Gastrocnemius medialis (tissue), 4 donors: ENCODE measurements at regions of chr15 and their contacts with region 1.

Region 1: DNA sequence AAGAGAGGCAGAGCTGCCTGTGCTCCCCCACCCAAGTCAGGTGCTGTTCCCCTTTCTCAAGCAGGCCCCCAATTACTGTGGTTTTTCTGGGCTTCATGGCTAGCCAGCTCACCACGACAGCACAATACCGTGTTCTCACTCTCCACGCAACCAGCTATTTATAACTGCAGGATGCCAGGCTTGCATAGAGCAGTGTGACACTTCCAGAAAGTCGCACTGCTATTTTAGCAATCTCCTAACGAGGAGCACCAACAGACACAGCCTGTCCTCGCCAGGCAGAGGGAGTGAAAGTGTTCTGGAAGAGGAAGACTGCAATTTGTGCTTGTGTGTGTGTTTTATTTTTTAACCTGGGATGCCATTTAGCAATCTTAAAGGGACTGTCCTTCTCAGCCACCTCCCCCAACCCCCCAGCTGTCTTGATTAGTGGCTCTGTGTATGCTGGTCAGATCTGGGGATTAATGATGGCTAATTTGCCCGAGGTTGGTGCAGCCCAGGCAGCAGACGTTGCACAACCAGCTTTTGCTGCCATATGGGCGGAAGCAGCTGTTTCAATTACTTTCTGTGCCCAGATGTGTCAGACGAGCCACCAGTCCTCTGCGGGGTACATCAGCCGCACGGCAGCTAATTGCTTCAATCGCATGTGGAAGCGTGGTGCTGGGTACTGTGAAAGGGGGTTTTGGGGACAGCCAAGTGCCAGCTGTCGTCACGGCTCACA is 268.0 kb upstream of the ARRDC4 start:
- DNase-seq: peak; percentile 31 to 32
- ATAC-seq: peak; percentile 90
- H3K4me3 ChIP-seq: peak overlapping the region; percentile 12 to 37 (median 28)
- H3K27ac ChIP-seq: peak overlapping the region; percentile 19 to 74 (median 53)
- H3K4me1 ChIP-seq: peaks cover 13 to 18% of the 10 kb centered on the region in 2 donors
- H3K27me3 ChIP-seq: no peaks in the 10 kb centered on the region
- CTCF ChIP-seq: no peak
- POLR2A ChIP-seq: peak in 1 of 2 donors; percentile 28

Region 2: DNA sequence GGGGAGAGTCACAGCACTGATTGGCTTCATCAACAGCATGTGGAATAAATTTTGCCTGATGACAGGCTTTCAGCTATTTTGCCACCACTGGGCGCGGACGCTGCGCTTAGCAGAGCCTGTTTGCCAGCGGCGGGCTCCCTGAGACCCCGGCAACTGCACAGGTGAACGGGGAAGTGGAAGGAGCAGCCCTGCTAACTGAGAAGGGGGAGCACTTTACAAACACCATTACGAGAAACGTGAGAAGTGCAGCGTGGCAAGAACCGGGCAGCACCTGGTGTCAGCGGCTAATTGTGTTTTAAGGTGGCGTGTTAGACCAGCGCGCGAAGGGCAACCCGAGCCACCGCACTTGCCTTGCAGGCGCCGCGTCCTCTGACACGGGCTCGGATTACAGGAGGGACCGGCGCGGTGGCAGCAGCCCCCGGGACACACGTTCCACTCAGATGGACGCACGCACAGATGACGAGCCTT is 39.7 kb before region 1 on chr15:
- in situ Hi-C with region 1: no loop called
- intact Hi-C with region 1: loop called (anchors 5 kb)
- DNase-seq: peak; percentile 11 to 18
- ATAC-seq: peak; percentile 30 to 43
- H3K4me3 ChIP-seq: peak overlapping the region; percentile 42 to 46 (median 44)
- H3K27ac ChIP-seq: peak overlapping the region in 1 of 4 donors; percentile 49
- H3K4me1 ChIP-seq: peaks cover 4 to 8% of the 10 kb centered on the region in 2 donors
- H3K27me3 ChIP-seq: no peaks in the 10 kb centered on the region
- CTCF ChIP-seq: no peak
- POLR2A ChIP-seq: no peak

Region 3: GRCh38 chr15:97728791-97729190 is 36.3 kb after region 1 on chr15:
- in situ Hi-C with region 1: no loop called
- intact Hi-C with region 1: no loop called
- DNase-seq: no peak
- ATAC-seq: peak in 1 of 2 donors; percentile 36
- H3K4me3 ChIP-seq: peak overlapping the region; percentile 11 to 41 (median 22)
- H3K27ac ChIP-seq: peak overlapping the region in 1 of 4 donors; percentile 19
- H3K4me1 ChIP-seq: no peaks in the 10 kb centered on the region
- H3K27me3 ChIP-seq: no peaks in the 10 kb centered on the region
- CTCF ChIP-seq: no peak
- POLR2A ChIP-seq: no peak